Cardiac septum (tissue), 1 donor: ENCODE measurements at regions of chr15 and their contacts with region 1.

Region 1: DNA sequence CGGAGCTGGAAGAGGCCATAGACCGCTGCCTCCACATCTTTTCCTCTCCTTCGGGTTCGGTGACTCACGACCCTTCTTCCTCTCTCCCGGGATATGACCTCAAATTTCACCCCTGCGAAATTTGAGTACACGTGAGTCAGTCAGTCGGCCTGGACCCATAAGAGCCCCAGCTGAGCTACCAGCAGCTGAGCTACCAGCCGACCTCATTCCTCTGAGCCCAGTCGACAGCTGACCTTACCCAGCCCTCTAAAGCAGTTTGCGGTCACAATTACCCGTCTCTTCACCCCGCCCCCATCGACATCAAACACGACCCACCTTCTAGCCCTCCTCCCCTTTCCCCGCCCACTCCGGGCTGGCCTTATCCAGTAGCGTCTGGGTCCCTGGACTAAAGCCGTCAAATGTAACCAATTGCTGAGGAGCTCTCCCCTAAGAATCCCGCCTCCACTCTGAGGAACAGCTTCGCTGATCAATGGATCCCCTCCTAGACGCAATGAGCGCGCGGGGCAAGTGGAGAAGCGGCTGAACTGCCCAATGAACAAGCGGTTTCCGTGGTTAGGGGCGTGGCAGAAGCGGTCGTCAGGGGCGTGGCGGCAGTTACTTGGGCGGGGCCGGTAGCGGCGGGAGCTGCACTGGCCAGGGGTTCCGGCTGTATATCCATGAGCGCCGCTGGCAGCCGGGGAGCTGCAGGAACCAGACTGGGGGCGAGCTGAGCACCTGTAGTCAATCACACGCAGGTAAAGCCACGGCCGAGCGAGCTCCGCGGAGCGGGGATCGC is at the start of gene ABHD2:
- DNase-seq: peak; percentile 100
- total RNA-seq, gene ABHD2: 185 TPM

Region 2: DNA sequence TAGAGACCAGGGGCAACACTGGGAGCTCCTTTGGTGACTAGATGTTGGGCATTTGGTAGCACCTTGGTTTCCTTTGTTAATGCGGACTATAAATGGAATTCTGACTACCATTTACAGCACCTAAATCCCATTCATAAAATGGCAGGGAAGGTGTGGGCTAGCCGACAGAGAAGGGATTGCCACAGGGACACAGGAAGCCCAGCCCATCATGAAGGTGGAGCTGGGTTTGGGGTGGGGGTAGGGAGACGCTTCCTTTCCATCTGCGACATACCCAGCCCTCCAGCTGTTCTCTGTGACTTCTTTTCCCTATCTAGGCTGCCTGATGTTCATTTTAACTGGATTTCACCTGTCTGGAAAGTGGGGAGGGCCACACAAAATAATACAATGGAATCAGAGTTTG is 21.2 kb after region 1 on chr15:
- intact Hi-C with region 1: no loop called
- DNase-seq: no peak

Region 3: GRCh38 chr15:89119489-89120123 is 31.6 kb after region 1 on chr15:
- intact Hi-C with region 1: loop called (anchors 2 kb)
- DNase-seq: no peak